PC-9 (cell line): ENCODE measurements at regions of chrX and their contacts with region 1.

Region 1: GRCh38 chrX:53683556-53684414 is 2.7 kb downstream of the HUWE1 start:
- DNase-seq: peak; percentile 90 to 97
- H3K4me3 ChIP-seq: peak overlapping the region; percentile 58
- H3K27ac ChIP-seq: peak overlapping the region; percentile 82
- H3K4me1 ChIP-seq: no peaks in the 10 kb centered on the region
- H3K27me3 ChIP-seq: no peaks in the 10 kb centered on the region
- CTCF ChIP-seq: no peak

Region 2: DNA sequence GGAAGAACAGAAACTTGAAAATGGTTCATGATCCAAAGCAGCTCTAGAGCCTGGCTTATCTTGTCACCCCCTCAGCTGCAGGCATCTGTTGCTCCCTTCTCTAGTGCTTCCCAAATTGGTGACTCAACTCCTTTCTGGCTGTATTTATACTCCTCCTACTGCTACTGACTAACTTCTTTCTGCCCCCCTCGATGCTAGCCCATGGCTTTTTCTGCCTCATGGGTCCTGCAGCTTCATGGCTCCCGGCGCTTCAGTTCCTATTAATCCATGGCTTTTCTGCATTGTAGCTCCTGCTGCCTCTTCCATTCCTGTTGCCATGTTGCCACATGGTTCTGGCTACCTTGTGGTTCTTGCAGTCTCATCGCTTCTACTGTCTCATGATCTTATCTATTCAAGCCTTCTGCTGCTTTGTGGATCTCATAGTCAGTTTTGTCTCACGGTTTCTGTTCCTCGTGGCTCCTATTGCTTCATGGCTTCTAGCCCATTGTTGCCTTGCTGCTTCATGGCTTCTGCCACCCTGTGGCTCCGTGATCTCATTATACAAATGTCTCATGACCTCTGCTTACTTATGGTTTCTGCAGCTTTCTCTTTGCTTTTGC is 309.5 kb before region 1 on chrX:
- CTCF ChIA-PET with region 1: no interaction called
- POLR2A ChIA-PET with region 1: interaction called, 19 read pairs
- intact Hi-C with region 1: no loop called
- DNase-seq: no peak
- H3K4me3 ChIP-seq: no peak overlapping the region
- H3K27ac ChIP-seq: no peak overlapping the region
- H3K4me1 ChIP-seq: no peaks in the 10 kb centered on the region
- H3K27me3 ChIP-seq: no peaks in the 10 kb centered on the region
- CTCF ChIP-seq: no peak

Region 3: DNA sequence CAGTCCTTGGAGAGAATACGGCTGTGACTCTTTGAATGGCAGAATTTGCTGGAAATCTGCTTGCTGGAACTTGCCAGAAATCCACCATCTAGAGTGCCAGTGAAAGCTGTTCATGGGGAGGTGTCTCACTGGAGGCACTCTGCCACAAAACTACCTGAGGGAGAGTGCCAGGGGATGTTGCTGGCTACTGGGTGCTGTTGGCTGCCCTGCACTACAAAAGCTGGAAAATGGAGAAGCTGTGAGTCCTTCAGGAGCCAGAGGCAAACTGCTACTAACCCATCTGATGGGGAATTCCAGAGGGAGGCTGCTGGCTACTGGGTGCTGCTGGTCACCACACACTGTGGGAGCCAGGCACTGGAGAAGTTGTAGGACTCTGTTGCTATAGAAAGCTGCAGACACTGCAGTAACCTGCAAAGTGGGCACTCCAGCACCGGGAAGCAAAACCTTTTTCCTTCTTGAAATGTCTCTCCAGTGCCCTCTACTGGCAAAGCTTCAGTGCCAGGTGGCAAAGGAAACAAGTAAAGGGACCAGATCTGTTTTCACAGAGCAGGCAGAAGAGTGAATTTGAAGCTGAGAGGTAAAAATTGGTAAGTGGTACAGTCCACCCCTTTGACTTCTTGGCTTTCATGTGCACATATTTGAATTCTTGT is 201.8 kb before region 1 on chrX:
- CTCF ChIA-PET with region 1: no interaction called
- POLR2A ChIA-PET with region 1: no interaction called
- intact Hi-C with region 1: no loop called
- DNase-seq: peak in 1 of 2 experiments; percentile 47
- H3K4me3 ChIP-seq: no peak overlapping the region
- H3K27ac ChIP-seq: no peak overlapping the region
- H3K4me1 ChIP-seq: no peaks in the 10 kb centered on the region
- H3K27me3 ChIP-seq: no peaks in the 10 kb centered on the region
- CTCF ChIP-seq: peak; percentile 58

Region 4: DNA sequence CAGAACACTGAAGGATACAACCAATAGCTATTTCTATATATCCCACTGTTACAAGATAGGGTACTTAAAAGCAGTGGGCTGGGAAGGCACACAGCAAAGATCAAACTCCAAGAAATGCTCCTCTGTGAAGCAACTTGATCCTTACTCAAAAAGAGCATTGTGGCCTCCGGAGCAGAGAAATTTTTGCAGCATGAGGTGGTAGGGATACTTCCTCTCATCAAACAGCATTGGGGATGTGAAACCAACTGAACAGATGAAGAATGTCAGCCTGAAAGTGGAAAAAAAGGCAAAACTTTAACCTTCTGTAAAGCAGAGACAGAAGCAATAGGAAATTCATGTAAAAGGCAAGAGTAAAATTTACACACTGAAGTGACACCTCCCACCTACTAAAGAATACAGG is 89.4 kb before region 1 on chrX:
- CTCF ChIA-PET with region 1: no interaction called
- POLR2A ChIA-PET with region 1: no interaction called
- intact Hi-C with region 1: no loop called
- DNase-seq: no peak
- H3K4me3 ChIP-seq: no peak overlapping the region
- H3K27ac ChIP-seq: no peak overlapping the region
- H3K4me1 ChIP-seq: no peaks in the 10 kb centered on the region
- H3K27me3 ChIP-seq: no peaks in the 10 kb centered on the region
- CTCF ChIP-seq: no peak

Region 5: DNA sequence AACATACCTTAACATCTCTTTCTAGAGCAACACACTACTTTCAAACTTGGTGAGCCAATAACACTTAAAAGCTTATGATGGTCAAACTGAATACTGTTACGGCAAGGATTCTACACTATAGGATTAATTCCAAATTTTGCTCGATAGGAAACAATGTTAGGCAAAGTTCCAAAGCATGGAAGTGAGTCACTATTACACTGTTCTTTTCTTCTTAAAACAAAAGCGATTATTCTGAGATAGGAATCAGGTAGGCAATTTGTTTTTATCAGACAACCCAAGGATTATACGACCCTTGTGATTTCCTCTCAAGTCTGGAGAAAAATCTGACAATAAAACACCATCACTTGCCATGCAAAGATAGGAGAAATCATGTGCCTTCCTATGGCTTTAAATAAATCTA is 78.8 kb before region 1 on chrX:
- CTCF ChIA-PET with region 1: no interaction called
- POLR2A ChIA-PET with region 1: no interaction called
- intact Hi-C with region 1: no loop called
- DNase-seq: no peak
- H3K4me3 ChIP-seq: no peak overlapping the region
- H3K27ac ChIP-seq: no peak overlapping the region
- H3K4me1 ChIP-seq: no peaks in the 10 kb centered on the region
- H3K27me3 ChIP-seq: no peaks in the 10 kb centered on the region
- CTCF ChIP-seq: no peak

Region 6: DNA sequence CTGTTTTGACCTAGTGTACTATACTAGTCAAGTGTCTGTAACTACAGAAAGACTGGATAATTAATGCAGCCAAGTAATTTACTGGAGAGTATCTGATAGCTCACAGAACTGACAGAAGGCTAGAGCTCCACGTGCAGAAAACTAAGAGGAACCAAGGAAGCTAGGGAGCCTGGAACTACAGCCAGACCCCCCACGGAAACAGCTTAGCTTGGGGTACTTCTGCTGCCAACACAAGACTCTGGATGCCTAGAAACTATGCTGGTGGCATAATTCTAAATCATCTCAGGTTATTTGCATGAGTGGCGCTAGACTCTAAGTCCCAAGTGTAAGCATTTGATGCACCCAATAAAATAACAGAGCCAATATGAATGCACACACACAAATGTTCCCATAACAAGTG is 23.8 kb before region 1 on chrX:
- CTCF ChIA-PET with region 1: no interaction called
- POLR2A ChIA-PET with region 1: no interaction called
- intact Hi-C with region 1: no loop called
- DNase-seq: no peak
- H3K4me3 ChIP-seq: no peak overlapping the region
- H3K27ac ChIP-seq: no peak overlapping the region
- H3K4me1 ChIP-seq: no peaks in the 10 kb centered on the region
- H3K27me3 ChIP-seq: no peaks in the 10 kb centered on the region
- CTCF ChIP-seq: no peak

Region 7: GRCh38 chrX:53714580-53715345 is 31.0 kb after region 1 on chrX:
- CTCF ChIA-PET with region 1: interaction called, 6 read pairs
- POLR2A ChIA-PET with region 1: interaction called, 33 read pairs
- intact Hi-C with region 1: loop called (anchors 1 kb)
- DNase-seq: peak; percentile 77 to 84
- H3K4me3 ChIP-seq: no peak overlapping the region
- H3K27ac ChIP-seq: peak overlapping the region; percentile 81
- H3K4me1 ChIP-seq: peaks cover 33% of the 10 kb centered on the region
- H3K27me3 ChIP-seq: no peaks in the 10 kb centered on the region
- CTCF ChIP-seq: no peak

Region 8: GRCh38 chrX:53813650-53814440 is 130.1 kb after region 1 on chrX:
- CTCF ChIA-PET with region 1: no interaction called
- POLR2A ChIA-PET with region 1: interaction called, 19 read pairs
- intact Hi-C with region 1: loop called (anchors 5 kb)
- DNase-seq: peak; percentile 61 to 81
- H3K4me3 ChIP-seq: no peak overlapping the region
- H3K27ac ChIP-seq: no peak overlapping the region
- H3K4me1 ChIP-seq: no peaks in the 10 kb centered on the region; the same call in 1 of the 2 replicates
- H3K27me3 ChIP-seq: no peaks in the 10 kb centered on the region
- CTCF ChIP-seq: no peak

Region 9: GRCh38 chrX:53939127-53939526 is 255.3 kb after region 1 on chrX:
- CTCF ChIA-PET with region 1: no interaction called
- POLR2A ChIA-PET with region 1: interaction called, 10 read pairs
- intact Hi-C with region 1: no loop called
- DNase-seq: no peak
- H3K4me3 ChIP-seq: no peak overlapping the region
- H3K27ac ChIP-seq: no peak overlapping the region
- H3K4me1 ChIP-seq: no peaks in the 10 kb centered on the region
- H3K27me3 ChIP-seq: no peaks in the 10 kb centered on the region
- CTCF ChIP-seq: no peak

Region 10: GRCh38 chrX:54171527-54172250 is 487.9 kb after region 1 on chrX:
- CTCF ChIA-PET with region 1: no interaction called
- POLR2A ChIA-PET with region 1: no interaction called
- intact Hi-C with region 1: loop called (anchors 2 kb)
- DNase-seq: no peak
- H3K4me3 ChIP-seq: no peak overlapping the region
- H3K27ac ChIP-seq: no peak overlapping the region
- H3K4me1 ChIP-seq: no peaks in the 10 kb centered on the region
- H3K27me3 ChIP-seq: no peaks in the 10 kb centered on the region
- CTCF ChIP-seq: no peak

Region 11: GRCh38 chrX:54999717-55000598 is 1316.2 kb after region 1 on chrX and contains the start of gene APEX2:
- CTCF ChIA-PET with region 1: no interaction called
- POLR2A ChIA-PET with region 1: no interaction called
- intact Hi-C with region 1: loop called (anchors 10 kb)
- DNase-seq: peak; percentile 89 to 92
- H3K4me3 ChIP-seq: peak within 1 kb of the TSS; percentile 74
- H3K27ac ChIP-seq: peak within 1 kb of the TSS; percentile 85
- H3K4me1 ChIP-seq: peaks cover 42% of the 10 kb centered on the region
- H3K27me3 ChIP-seq: no peaks in the 10 kb centered on the region
- CTCF ChIP-seq: no peak
- total RNA-seq, gene APEX2: 48.0 and 57.7 TPM in 2 replicates